ENCODE measurements at regions of chr1 and their contacts with region 1.

Region 1: GRCh38 chr1:225809842-225810578 is at the start of gene EPHX1:
- DNase-seq: peak; percentile 88 to 94 (median 92)
- ATAC-seq: peak; percentile 94
- H3K4me3 ChIP-seq: peak within 1 kb of the TSS; percentile 48
- H3K27ac ChIP-seq: 0 out of 3 replicates have a peak within 1 kb of the TSS, but pooled peaks have one; percentile 16
- H3K4me1 ChIP-seq: peaks cover 17 to 30% of the 10 kb centered on the region in 2 experiments
- H3K27me3 ChIP-seq: no peaks in the 10 kb centered on the region
- CTCF ChIP-seq: peak; percentile 20 to 60 (median 54); a peak in 4 of 6 replicates
- EP300 ChIP-seq: no peak
- POLR2A ChIP-seq: no peak; the same call in 1 of the 2 replicates
- RAD21 ChIP-seq: peak in 1 of 2 experiments; percentile 45; a peak in 2 of 4 replicates
- polyA plus RNA-seq, gene EPHX1: 0.21 to 0.48 TPM

Region 2: DNA sequence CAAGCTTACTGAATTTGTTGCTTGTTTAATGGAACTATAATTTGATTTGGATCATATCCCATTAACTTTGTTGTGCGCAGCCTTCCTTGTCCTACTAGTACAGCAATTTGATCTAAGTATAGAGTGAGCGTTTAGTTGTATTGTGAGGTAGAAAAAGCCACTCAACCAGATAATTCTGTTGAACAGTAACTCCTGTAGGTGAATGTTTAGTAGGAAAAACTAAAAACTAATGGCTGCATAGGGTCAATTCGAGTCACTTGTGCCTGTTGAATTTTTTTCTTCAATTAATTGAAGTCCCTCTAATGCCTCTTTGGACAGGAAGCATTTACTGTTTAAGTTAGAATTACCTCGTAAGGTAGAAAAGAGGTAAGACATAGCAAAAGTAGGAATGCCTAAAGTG is 15.1 kb before region 1 on chr1:
- CTCF ChIA-PET with region 1: no interaction called
- POLR2A ChIA-PET with region 1: interaction called, 22 read pairs
- in situ Hi-C with region 1: no loop called
- intact Hi-C with region 1: no loop called
- DNase-seq: no peak
- ATAC-seq: no peak
- H3K4me3 ChIP-seq: no peak overlapping the region
- H3K27ac ChIP-seq: no peak overlapping the region
- H3K4me1 ChIP-seq: no peaks in the 10 kb centered on the region
- H3K27me3 ChIP-seq: no peaks in the 10 kb centered on the region
- CTCF ChIP-seq: no peak
- EP300 ChIP-seq: no peak
- POLR2A ChIP-seq: no peak
- RAD21 ChIP-seq: no peak

Region 3: GRCh38 chr1:225881969-225882693 is 72.1 kb after region 1 on chr1 and contains the start of gene TMEM63A:
- CTCF ChIA-PET with region 1: no interaction called
- POLR2A ChIA-PET with region 1: no interaction called
- in situ Hi-C with region 1: no loop called
- intact Hi-C with region 1: no loop called
- DNase-seq: peak; percentile 95 to 97 (median 97)
- ATAC-seq: peak; percentile 90
- H3K4me3 ChIP-seq: peak within 1 kb of the TSS; percentile 87
- H3K27ac ChIP-seq: peak within 1 kb of the TSS; percentile 88
- H3K4me1 ChIP-seq: peaks cover 23 to 56% of the 10 kb centered on the region in 2 experiments; a peak in 4 of 5 replicates
- H3K27me3 ChIP-seq: no peaks in the 10 kb centered on the region
- CTCF ChIP-seq: peak; percentile 52 to 78 (median 55); a peak in 5 of 6 replicates
- EP300 ChIP-seq: no peak
- POLR2A ChIP-seq: peak; percentile 87
- RAD21 ChIP-seq: peak; percentile 33 to 44; a peak in 3 of 4 replicates
- polyA plus RNA-seq, gene TMEM63A: 2.0 to 2.8 TPM

Measured in K562 (cell line).